ENCODE measurements at regions of chr2 and their contacts with region 1.

Region 1: DNA sequence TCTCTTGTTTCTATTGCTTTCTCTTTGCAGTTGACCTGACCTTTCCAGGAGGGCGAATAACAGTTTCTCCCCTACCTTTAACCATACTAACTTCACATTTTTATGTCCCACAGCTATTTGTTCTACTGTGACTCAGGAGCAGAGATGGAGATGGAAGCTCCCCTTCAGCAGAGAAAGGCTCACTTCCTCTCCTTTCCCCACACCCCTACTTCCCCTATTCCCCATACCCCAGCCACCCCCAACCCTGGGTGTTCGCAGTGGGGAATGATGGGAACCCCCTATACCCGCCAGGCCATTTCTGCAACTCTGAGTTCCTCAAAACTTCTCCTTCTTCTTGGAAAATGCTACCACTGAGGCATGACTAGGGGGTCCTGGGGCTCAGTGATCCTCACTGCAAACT is 285.4 kb upstream of the MGAT5 start:
- DNase-seq: no peak
- ATAC-seq: peak; percentile 37
- H3K4me3 Mint-ChIP-seq: no peak overlapping the region
- H3K27ac Mint-ChIP-seq: peak overlapping the region; percentile 19
- H3K4me1 Mint-ChIP-seq: peaks cover 13% of the 10 kb centered on the region
- H3K27me3 Mint-ChIP-seq: peaks cover 2% of the 10 kb centered on the region
- CTCF ChIP-seq: no peak

Region 2: DNA sequence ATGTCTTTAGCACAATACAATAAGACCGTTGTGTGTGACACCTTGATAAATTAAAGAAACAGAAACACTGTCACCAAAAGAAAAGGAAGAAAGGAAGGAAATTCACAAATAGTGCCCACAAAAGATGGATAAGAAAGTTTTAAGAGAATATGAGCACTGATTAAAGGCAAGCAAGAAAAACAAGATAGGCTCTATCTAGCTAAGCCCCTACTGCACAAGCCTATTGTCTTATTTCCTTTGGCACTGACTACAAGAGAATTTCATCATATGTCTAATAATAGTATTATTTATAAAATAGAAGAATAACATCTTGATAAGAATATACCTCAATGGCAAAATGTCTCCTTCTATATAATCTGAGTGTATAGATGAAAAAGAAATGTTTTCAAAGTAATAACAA is 735.9 kb before region 1 on chr2:
- CTCF ChIA-PET with region 1: no interaction called
- POLR2A ChIA-PET with region 1: no interaction called
- intact Hi-C with region 1: no loop called
- DNase-seq: no peak
- ATAC-seq: no peak
- H3K4me3 Mint-ChIP-seq: no peak overlapping the region
- H3K27ac Mint-ChIP-seq: no peak overlapping the region
- H3K4me1 Mint-ChIP-seq: no peaks in the 10 kb centered on the region
- H3K27me3 Mint-ChIP-seq: no peaks in the 10 kb centered on the region
- CTCF ChIP-seq: no peak

Region 3: DNA sequence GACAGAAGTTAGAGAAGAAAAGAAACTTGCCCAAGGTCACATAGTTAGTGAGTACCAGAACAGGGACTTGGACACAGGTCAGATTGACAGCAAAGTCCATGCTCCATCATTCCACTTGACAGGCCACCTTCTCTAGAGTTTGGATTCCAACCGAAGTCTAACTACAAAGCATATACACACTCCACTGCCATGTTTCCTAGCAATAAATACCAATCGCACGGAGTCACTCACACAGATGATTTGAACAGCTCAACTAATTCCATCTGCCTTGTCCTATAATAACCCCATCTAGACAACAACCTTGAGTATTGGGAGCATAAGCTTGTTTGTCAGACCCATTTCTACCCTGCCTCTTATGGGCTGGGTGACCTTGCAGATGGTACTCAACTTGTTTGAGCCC is 49.2 kb before region 1 on chr2:
- CTCF ChIA-PET with region 1: no interaction called
- POLR2A ChIA-PET with region 1: no interaction called
- intact Hi-C with region 1: loop called (anchors 5 kb)
- DNase-seq: no peak
- ATAC-seq: no peak
- H3K4me3 Mint-ChIP-seq: no peak overlapping the region
- H3K27ac Mint-ChIP-seq: no peak overlapping the region
- H3K4me1 Mint-ChIP-seq: no peaks in the 10 kb centered on the region
- H3K27me3 Mint-ChIP-seq: peaks cover 6% of the 10 kb centered on the region
- CTCF ChIP-seq: no peak